ENCODE measurements at regions of chr22 and their contacts with region 1.

Region 1: GRCh38 chr22:41106122-41106968 is 14.0 kb downstream of the EP300 start:
- DNase-seq: no peak
- H3K4me3 ChIP-seq: no peak overlapping the region
- H3K27ac ChIP-seq: no peak overlapping the region
- H3K4me1 ChIP-seq: no peaks in the 10 kb centered on the region
- H3K27me3 ChIP-seq: no peaks in the 10 kb centered on the region
- CTCF ChIP-seq: no peak

Region 2: GRCh38 chr22:40739721-40740120 is 366.6 kb before region 1 on chr22:
- CTCF ChIA-PET with region 1: interaction called, 12 read pairs
- POLR2A ChIA-PET with region 1: no interaction called
- intact Hi-C with region 1: no loop called
- DNase-seq: no peak
- H3K4me3 ChIP-seq: no peak overlapping the region
- H3K27ac ChIP-seq: no peak overlapping the region
- H3K4me1 ChIP-seq: no peaks in the 10 kb centered on the region
- H3K27me3 ChIP-seq: no peaks in the 10 kb centered on the region
- CTCF ChIP-seq: no peak

Region 3: GRCh38 chr22:41052661-41053490 is 53.5 kb before region 1 on chr22:
- CTCF ChIA-PET with region 1: no interaction called
- POLR2A ChIA-PET with region 1: no interaction called
- intact Hi-C with region 1: no loop called
- DNase-seq: peak; percentile 10 to 84
- H3K4me3 ChIP-seq: no peak overlapping the region
- H3K27ac ChIP-seq: peak overlapping the region; percentile 43
- H3K4me1 ChIP-seq: peaks cover 25% of the 10 kb centered on the region
- H3K27me3 ChIP-seq: no peaks in the 10 kb centered on the region
- CTCF ChIP-seq: no peak

Region 4: GRCh38 chr22:41128606-41129005 is 22.3 kb after region 1 on chr22:
- CTCF ChIA-PET with region 1: no interaction called
- POLR2A ChIA-PET with region 1: no interaction called
- intact Hi-C with region 1: no loop called
- DNase-seq: no peak
- H3K4me3 ChIP-seq: no peak overlapping the region
- H3K27ac ChIP-seq: no peak overlapping the region
- H3K4me1 ChIP-seq: no peaks in the 10 kb centered on the region
- H3K27me3 ChIP-seq: no peaks in the 10 kb centered on the region
- CTCF ChIP-seq: no peak

Region 5: GRCh38 chr22:41458161-41458728 is 351.9 kb after region 1 on chr22:
- CTCF ChIA-PET with region 1: no interaction called
- POLR2A ChIA-PET with region 1: interaction called, 16 read pairs
- intact Hi-C with region 1: no loop called
- DNase-seq: no peak
- H3K4me3 ChIP-seq: no peak overlapping the region
- H3K27ac ChIP-seq: no peak overlapping the region
- H3K4me1 ChIP-seq: no peaks in the 10 kb centered on the region
- H3K27me3 ChIP-seq: no peaks in the 10 kb centered on the region
- CTCF ChIP-seq: no peak

Measured in PC-9 (cell line).